Mammary epithelial cell (primary cell): ENCODE measurements at regions of chr16 and their contacts with region 1.

Region 1: DNA sequence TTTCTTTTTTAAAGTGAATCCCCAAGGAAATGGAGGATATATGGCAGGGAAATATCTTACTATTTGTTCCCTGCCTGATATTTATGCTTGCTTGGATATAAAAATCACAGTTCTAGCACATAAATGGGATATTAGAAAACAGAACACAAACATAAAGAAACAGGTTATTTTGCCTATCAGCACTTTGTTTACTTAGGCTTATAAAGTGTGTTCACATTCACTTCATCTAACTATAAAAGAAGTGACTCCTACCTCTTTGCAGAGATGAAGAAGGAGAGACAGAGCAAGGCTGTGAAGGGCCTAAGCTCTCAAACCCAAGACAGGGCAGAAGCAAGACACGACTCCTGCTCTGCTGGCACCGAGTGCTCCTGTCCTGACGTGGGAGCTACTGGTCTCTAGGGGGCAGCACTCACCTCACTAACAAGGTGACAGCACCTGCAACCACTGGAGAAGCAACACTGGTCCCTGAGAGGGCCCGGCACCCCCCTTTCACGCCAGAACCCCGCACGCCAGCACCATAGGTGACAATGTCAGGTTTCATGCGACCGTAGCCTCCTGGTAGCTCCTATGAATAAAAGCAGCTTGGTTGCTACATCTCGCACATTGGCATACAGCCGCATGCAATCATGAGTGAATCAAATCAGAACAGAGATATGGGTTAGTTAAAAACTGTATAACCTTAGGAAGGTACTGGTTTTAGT is 32.0 kb downstream of the MBTPS1 start:
- DNase-seq: peak; percentile 44
- H3K4me3 ChIP-seq: no peak overlapping the region
- H3K27ac ChIP-seq: no peak overlapping the region
- H3K4me1 ChIP-seq: peaks cover 8% of the 10 kb centered on the region
- H3K27me3 ChIP-seq: no peaks in the 10 kb centered on the region
- CTCF ChIP-seq: peak; percentile 72 to 91

Region 2: DNA sequence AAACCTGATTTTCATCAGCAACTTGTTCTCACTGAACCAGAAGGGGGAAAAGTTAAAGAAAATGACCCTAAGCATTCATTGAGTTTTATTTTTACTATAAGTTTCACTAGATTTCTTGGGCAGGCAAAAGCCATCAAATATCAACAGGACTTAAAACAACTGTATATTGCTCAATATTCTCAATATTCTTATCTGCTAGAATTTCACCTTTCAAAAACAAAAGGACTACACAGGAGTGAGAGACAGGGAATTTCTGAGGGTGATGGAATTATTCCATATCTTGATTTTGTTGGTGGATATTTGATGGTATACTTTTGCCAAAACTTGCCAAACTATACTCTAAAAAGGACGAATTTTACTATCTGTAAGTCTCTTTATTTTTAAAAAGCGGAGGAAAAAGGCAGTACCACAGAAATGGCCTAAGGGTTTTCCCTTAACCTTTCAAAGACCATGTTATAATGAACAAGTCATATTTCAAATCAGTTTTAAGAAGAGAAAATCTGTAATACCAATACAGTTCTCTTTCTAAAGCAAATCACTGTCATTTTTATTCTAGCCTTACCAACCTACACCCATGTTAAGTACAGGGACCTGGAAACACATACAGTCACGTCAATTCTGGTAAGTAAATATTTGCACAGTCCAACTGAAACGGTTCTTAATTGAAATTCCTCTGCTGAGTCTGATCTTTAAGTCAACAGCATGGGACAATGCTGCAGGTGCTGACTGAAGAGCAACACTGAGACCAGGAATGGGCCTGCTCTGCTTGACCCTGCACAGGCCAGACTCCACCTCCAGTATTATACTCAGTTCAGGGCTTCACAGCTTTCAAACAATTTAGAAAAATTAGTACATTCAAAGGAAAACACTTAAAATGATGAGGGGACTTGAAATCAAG is 11.6 kb after region 1 on chr16:
- CTCF ChIA-PET with region 1: no interaction called
- dilution Hi-C with region 1: no loop called
- in situ Hi-C with region 1: no loop called
- intact Hi-C with region 1: no loop called
- DNase-seq: no peak
- H3K4me3 ChIP-seq: no peak overlapping the region
- H3K27ac ChIP-seq: no peak overlapping the region
- H3K4me1 ChIP-seq: peaks cover 7% of the 10 kb centered on the region
- H3K27me3 ChIP-seq: no peaks in the 10 kb centered on the region
- CTCF ChIP-seq: no peak

Region 3: GRCh38 chr16:84144859-84145639 is 60.3 kb after region 1 on chr16 and contains the starts of genes DNAAF1 and HSDL1:
- CTCF ChIA-PET with region 1: no interaction called
- dilution Hi-C with region 1: no loop called
- in situ Hi-C with region 1: no loop called
- intact Hi-C with region 1: loop called (anchors 5 kb)
- DNase-seq: peak; percentile 81
- H3K4me3 ChIP-seq: peak within 1 kb of the TSS; percentile 80 to 91 (median 85)
- H3K27ac ChIP-seq: peak within 1 kb of the TSS; percentile 11
- H3K4me1 ChIP-seq: peaks cover 7% of the 10 kb centered on the region
- H3K27me3 ChIP-seq: no peaks in the 10 kb centered on the region
- CTCF ChIP-seq: peak in 1 of 2 donors; percentile 16
- total RNA-seq, gene DNAAF1: 0.16 to 0.17 TPM
- total RNA-seq, gene HSDL1: 14.5 to 15.5 TPM

Region 4: DNA sequence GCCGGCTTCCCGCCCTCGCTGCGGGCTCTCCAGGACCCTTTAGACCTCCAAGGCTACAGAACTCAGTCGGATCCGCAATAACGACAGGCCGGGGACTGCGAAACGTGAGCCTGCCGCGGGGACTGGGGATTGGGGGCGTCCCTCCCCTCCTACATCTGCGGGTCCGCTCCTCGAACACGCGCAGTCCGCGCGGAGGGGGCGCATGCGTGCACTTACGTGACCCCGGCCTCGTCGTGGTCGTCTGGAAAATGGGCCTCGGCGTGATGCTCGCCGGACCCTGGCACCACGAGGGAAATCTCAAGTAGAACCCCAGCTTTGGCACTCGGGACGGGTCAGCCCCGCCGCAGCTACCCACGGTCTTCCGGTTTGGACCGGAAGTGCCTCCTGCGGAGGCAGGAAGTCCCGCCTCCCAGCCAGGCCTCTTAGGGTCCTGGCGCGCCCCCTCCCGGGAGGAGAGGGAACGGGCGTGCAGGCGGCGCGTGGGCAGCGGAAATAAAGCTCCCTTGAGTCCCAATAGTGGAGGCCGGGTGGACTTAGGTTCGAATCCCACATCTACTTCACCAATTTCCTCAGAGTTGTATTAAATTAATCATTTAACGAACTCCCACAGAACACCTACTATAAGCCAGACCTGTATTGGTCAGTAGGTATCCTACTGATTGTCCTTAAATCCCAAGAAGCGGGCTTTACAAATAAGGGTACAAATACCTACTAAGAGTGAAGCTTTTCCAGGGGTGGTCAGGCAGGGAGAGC is 102.1 kb after region 1 on chr16 and contains the start of gene TAF1C:
- CTCF ChIA-PET with region 1: interaction called, 8 read pairs
- dilution Hi-C with region 1: no loop called
- in situ Hi-C with region 1: no loop called
- intact Hi-C with region 1: loop called (anchors 1 kb)
- DNase-seq: peak; percentile 87
- H3K4me3 ChIP-seq: peak within 1 kb of the TSS; percentile 92 to 97 (median 97)
- H3K27ac ChIP-seq: peak within 1 kb of the TSS; percentile 51
- H3K4me1 ChIP-seq: peaks cover 3% of the 10 kb centered on the region
- H3K27me3 ChIP-seq: no peaks in the 10 kb centered on the region
- CTCF ChIP-seq: peak; percentile 81 to 98
- total RNA-seq, gene TAF1C: 15.3 to 30.1 TPM

Region 5: DNA sequence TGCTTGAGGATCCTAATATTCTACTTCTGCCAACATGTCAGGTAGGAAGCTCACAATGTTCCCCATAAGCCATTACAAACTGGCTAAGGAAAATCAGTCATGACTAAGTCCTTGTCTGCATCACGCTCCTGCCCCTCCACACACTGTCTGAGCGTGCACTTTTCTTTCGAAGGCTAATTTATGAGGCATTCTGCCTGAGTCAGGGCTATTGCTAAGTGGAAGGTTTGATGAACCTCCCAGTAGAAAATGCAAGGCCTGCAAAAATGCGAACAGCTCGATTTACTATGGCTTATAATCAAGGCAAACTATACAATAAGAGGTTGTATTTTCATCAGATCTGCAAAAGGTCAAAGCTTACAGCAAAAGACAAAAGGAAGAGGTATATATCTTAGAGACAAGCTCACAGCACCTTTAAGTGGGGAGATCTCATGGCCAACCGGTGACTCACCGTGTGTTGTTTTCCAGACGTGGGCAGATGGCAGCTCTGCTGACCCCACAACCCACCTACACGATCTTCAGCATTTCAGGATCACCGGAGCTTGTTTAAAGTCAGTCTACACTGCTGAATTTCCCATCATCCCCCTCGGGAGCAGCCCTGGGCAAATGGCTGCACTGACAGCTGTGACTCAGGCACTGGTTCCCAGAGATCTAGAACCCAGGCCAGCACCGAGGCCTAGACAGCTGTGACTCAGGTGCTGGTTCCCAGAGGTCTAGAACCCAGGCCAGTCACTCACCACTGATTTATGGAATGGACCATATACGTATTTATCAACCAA is 393.6 kb after region 1 on chr16:
- CTCF ChIA-PET with region 1: no interaction called
- dilution Hi-C with region 1: no loop called
- in situ Hi-C with region 1: loop called in 1 of 2 experiments (anchors 25 kb)
- intact Hi-C with region 1: loop called (anchors 10 kb)
- DNase-seq: peak; percentile 81
- H3K4me3 ChIP-seq: no peak overlapping the region
- H3K27ac ChIP-seq: peak overlapping the region; percentile 14
- H3K4me1 ChIP-seq: peaks cover 23% of the 10 kb centered on the region
- H3K27me3 ChIP-seq: no peaks in the 10 kb centered on the region
- CTCF ChIP-seq: no peak